ENCODE measurements at regions of chr11 and their contacts with region 1.

Region 1: GRCh38 chr11:32792948-32793475 is 1.4 kb downstream of the CCDC73 start:
- ATAC-seq: peak; percentile 59 to 86 (median 72)
- H3K4me3 ChIP-seq: no peak overlapping the region
- H3K27ac ChIP-seq: no peak overlapping the region
- H3K4me1 ChIP-seq: no peaks in the 10 kb centered on the region

Region 2: GRCh38 chr11:32312865-32313403 is 480.1 kb before region 1 on chr11:
- in situ Hi-C with region 1: loop called in 4 of 9 experiments (anchors 25 kb)
- ATAC-seq: peak; percentile 29 to 85 (median 70)
- H3K4me3 ChIP-seq: no peak overlapping the region
- H3K27ac ChIP-seq: no peak overlapping the region
- H3K4me1 ChIP-seq: peaks cover 0 to 5% of the 10 kb centered on the region in 2 donors

Region 3: GRCh38 chr11:32326522-32326921 is 466.5 kb before region 1 on chr11:
- in situ Hi-C with region 1: loop called in 5 of 9 experiments (anchors 10 to 25 kb)
- ATAC-seq: no peak
- H3K4me3 ChIP-seq: no peak overlapping the region
- H3K27ac ChIP-seq: no peak overlapping the region
- H3K4me1 ChIP-seq: no peaks in the 10 kb centered on the region

Region 4: DNA sequence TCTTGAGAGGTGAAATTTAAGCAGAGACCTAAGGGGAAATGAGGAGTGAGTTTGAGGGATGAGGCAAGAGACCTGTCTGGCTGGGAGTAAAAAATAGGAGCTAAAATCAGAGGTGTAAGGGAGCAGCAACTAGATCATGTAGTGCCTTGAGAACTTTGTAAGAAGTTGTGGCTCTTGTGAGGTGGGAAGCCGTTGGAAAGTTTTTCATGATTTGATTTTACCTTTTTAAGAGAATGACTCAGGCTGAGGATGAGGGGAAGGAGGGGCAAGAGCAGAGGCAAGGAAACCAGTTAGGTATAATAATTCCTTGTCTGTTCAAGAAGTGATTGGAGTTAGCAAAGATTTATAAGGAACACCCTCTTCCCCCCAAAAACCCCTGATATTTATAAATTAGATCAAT is 125.4 kb after region 1 on chr11:
- in situ Hi-C with region 1: no loop called
- ATAC-seq: no peak
- H3K4me3 ChIP-seq: no peak overlapping the region
- H3K27ac ChIP-seq: no peak overlapping the region
- H3K4me1 ChIP-seq: no peaks in the 10 kb centered on the region